Activated T-helper 1 cell treated with anti-CD3 and anti-CD28 coated beads, Interleukin-12 subunit alpha, Interleukin-12 subunit beta, Interleukin-2, Interleukin-4 antibody, amounts not matched to agents 30 ng/mL and 10 ng/mL and 1 ng/mL, durations not matched to agents 14 hours and 24 hours and 36 hours (primary cell): ENCODE measurements at regions of chr14 and their contacts with region 1.

Region 1: DNA sequence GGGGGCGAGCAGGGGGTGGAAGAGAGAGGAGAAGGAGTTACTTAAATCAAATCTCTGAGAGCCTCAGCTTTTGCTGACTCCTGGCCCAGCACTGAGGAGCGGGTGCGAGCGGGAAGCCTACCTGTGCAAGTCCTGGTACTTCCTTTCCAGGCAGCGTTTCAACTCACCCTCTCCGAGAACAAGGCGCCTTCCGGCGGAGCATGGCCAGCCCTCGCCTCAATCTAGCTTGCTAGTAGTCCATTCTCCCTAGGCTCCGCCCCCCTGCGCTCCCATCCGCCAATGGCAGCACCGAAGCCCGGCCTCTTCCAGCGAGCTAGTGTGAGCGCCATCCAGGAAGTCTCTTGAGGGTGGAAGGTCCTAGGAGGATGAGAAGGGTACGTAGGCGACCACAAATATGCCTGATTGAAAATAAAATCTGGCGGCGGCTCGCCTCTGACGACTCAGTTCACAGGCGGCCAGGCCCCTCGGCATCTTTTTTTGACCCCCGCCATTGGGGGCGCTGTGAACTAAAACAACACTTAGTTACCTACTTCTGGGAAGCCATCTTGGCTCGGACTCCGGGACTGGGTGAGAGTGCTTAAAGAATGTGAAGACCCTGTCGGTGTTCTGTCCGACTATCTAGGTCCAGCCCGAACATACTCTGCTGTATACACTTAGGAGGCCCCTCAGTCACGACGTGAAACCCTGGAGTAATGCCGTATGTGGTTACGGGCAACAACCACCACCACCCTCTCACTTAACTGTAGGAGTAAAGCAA is at the start of gene CHD8:
- DNase-seq: peak; percentile 100
- H3K4me3 Mint-ChIP-seq: peak within 1 kb of the TSS; percentile 96
- H3K27ac Mint-ChIP-seq: peak within 1 kb of the TSS; percentile 95
- H3K4me1 Mint-ChIP-seq: peaks cover 40% of the 10 kb centered on the region
- H3K27me3 Mint-ChIP-seq: no peaks in the 10 kb centered on the region
- total RNA-seq, gene CHD8: 126 and 131 TPM in 2 replicates

Region 2: DNA sequence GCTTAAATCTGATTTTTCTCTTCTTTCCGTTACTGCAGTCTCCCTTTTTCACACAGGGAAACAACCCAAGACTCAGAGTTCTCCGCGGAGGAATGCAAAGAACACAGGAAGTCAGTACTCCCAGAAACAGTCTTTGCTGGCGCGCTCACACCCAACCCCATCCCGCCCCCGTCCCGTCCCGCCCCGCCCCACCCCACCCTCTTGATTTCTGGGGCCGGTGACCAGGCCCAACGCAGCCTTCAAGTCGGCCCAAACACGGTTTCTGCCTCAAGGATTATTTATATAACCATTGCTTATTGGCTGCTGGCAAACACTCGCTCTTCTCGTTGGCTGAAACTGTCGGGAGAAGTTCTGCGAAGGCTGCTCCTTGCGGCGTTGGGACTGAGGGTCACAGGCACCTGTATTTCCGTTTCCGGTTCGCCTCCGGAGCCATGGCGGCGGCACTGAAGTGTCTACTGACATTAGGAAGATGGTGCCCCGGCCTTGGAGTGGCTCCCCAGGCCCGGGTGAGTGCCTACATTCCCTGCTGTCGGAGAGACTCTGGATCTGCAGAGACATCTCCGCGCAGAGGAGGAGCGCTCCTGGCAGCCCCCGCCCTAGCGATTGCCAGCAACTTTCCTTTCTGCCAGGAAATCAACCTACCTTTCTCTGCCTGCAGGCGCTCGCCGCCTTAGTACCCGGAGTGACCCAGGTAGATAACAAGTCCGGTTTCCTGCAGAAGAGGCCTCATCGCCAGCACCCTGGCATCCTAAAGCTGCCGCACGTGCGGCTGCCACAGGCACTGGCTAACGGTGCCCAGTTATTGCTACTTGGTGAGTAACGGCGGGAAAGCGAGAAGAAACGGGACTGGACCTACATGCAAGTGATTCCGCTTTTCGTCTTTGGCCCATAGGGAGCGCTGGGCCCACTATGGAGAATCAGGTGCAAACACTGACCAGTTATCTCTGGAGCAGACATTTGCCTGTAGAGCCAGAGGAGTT is 466.2 kb before region 1 on chr14 and contains the start of gene METTL17:
- intact Hi-C with region 1: loop called (anchors 1 kb)
- DNase-seq: peak; percentile 83
- H3K4me3 Mint-ChIP-seq: peak within 1 kb of the TSS; percentile 96
- H3K27ac Mint-ChIP-seq: peak within 1 kb of the TSS; percentile 85
- H3K4me1 Mint-ChIP-seq: peaks cover 25% of the 10 kb centered on the region
- H3K27me3 Mint-ChIP-seq: no peaks in the 10 kb centered on the region
- total RNA-seq, gene METTL17: 96.1 and 100 TPM in 2 replicates

Region 3: DNA sequence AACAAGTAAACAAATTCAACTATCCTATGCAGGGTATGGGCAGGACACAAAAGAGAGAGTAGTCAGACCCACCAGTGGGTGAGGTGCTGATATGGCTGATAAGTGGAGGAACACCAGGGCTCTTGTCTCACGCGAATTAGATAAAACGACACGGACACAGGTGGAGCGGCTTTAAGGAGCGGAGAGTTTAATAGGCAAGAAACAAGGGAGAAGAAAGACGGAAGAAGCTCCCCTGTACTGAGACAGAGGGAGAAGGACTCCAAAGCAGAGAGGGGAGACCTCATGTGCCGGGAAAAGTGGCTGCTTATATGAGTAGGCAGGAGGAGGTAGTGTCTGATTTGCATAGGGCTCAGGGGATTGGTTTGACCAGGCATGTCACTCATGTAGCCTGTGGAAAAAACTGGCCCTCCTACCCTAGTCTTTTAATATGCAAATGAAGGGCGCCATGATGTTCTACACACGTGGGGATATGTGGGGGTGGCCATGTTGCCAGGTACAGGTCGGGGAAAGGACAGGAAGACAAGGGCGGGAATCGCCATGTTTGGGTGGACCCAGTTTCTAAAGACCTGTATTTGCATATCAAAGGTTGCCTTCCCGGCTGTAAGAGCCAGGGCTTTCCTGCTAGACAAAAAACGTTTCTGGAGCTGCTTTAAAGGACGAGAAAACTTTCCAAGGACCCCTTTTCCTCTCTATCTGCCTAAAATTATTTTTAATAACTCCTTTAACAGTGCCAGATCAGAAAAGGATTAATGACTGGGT is 147.4 kb before region 1 on chr14:
- intact Hi-C with region 1: loop called (anchors 5 kb)
- DNase-seq: peak; percentile 65
- H3K4me3 Mint-ChIP-seq: peak overlapping the region; percentile 64
- H3K27ac Mint-ChIP-seq: peak overlapping the region; percentile 64
- H3K4me1 Mint-ChIP-seq: peaks cover 16% of the 10 kb centered on the region
- H3K27me3 Mint-ChIP-seq: peaks cover 3% of the 10 kb centered on the region

Region 4: DNA sequence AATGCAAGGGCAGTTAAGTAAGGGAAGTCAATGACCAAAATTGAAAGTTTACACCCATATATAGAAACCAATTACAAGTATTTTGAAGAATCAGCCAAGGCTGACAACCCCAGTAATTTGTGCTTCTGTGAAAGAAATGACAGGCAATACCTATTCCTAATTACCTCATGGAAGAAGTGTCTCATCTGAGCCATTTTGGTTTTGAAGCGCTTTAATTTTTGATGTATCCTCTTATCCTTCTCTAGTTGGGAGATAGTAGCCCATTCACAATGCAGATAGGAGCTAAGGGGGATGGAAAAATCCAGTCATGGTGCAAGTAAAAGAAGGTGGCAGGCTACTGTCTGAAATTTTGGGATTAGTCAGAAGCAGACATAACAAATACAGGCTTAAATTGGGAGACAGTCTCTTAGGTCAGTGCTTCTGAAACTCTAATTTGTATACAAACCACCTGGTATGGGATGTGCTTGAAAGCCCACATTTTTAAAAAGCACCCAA is 41.9 kb before region 1 on chr14:
- intact Hi-C with region 1: loop called (anchors 1 kb)
- DNase-seq: no peak
- H3K4me3 Mint-ChIP-seq: peak overlapping the region; percentile 19
- H3K27ac Mint-ChIP-seq: peak overlapping the region; percentile 92
- H3K4me1 Mint-ChIP-seq: peaks cover 26% of the 10 kb centered on the region
- H3K27me3 Mint-ChIP-seq: no peaks in the 10 kb centered on the region

Region 5: GRCh38 chr14:21476925-21477681 is 21.0 kb after region 1 on chr14 and contains the starts of genes RAB2B and TOX4:
- intact Hi-C with region 1: loop called (anchors 1 kb)
- DNase-seq: peak; percentile 96
- H3K4me3 Mint-ChIP-seq: peak within 1 kb of the TSS; percentile 100
- H3K27ac Mint-ChIP-seq: peak within 1 kb of the TSS; percentile 99
- H3K4me1 Mint-ChIP-seq: peaks cover 35% of the 10 kb centered on the region
- H3K27me3 Mint-ChIP-seq: peaks cover 2% of the 10 kb centered on the region
- total RNA-seq, gene RAB2B: 30.3 and 32.5 TPM in 2 replicates
- total RNA-seq, gene TOX4: 77.5 and 86.6 TPM in 2 replicates

Region 6: DNA sequence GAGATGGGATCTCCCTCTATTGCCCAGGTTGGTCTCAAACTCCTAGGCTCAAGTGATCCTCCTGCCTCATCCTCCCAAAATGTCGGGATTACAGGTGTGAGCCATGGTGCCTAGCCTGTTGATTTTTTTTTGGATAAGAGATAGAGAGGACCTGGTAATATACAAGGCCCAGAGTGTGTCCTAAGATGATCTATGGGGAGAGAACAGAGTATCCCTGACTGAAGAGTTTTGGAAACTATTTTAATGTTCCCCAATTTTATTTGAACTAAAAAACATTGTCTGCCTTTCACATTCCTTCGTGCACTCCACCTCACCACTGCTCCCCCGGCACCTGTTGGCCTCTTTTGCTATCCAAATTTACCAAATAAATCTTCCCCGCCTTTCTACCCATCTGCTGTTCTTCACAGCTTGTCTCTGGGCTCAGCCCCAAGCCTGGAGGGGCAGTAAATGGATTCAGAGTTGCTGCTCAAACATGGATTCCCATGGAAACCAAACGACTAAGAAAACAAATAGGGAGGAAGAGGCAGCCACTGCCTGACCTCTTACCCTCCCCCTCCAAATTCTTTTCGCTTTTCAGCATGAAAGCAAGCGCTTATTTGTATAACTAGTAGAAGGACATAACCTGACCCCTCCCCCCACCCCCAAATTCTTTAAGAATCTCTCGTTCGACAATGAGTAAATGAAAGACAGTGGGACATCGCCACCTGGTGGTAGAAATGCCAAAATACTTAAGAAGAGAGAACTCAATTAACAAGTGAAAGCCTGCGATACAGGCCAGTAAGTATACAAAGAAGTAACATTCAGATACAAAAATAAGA is 101.2 kb after region 1 on chr14:
- intact Hi-C with region 1: loop called (anchors 1 kb)
- DNase-seq: peak; percentile 62
- H3K4me3 Mint-ChIP-seq: no peak overlapping the region
- H3K27ac Mint-ChIP-seq: peak overlapping the region; percentile 68
- H3K4me1 Mint-ChIP-seq: peaks cover 8% of the 10 kb centered on the region
- H3K27me3 Mint-ChIP-seq: no peaks in the 10 kb centered on the region

Region 7: DNA sequence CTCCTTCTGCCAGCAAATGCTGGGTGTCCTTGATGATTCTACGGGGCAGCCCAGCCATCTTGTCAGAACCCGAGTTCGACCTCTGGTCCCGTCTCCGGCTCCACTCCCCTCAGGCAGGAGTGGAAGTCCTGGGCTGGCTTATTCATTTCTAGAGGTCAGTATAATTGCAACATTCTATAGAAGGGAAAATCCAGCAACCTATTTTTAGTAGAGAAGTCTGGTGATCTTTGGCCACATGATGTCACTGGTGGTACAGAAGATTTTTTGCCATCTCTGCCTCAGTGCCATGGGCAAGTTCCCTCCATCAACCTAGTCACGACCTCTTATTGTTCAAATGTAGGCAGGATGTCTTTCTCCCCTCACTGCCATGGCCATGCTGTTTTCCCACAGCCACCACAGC is 156.2 kb after region 1 on chr14:
- intact Hi-C with region 1: no loop called
- DNase-seq: no peak
- H3K4me3 Mint-ChIP-seq: no peak overlapping the region
- H3K27ac Mint-ChIP-seq: no peak overlapping the region
- H3K4me1 Mint-ChIP-seq: no peaks in the 10 kb centered on the region
- H3K27me3 Mint-ChIP-seq: peaks cover 21% of the 10 kb centered on the region